ENCODE measurements at regions of chr15 and their contacts with region 1.

Region 1: GRCh38 chr15:77507911-77508310 is 87.2 kb downstream of the HMG20A start:
- DNase-seq: no peak
- H3K4me3 ChIP-seq: no peak overlapping the region
- H3K27ac ChIP-seq: peak overlapping the region; percentile 47 to 71 (median 54)
- H3K4me1 ChIP-seq: peaks cover 4 to 33% (median 29%) of the 10 kb centered on the region in 4 donors
- H3K27me3 ChIP-seq: no peaks in the 10 kb centered on the region
- CTCF ChIP-seq: no peak
- EP300 ChIP-seq: no peak
- POLR2A ChIP-seq: no peak

Region 2: DNA sequence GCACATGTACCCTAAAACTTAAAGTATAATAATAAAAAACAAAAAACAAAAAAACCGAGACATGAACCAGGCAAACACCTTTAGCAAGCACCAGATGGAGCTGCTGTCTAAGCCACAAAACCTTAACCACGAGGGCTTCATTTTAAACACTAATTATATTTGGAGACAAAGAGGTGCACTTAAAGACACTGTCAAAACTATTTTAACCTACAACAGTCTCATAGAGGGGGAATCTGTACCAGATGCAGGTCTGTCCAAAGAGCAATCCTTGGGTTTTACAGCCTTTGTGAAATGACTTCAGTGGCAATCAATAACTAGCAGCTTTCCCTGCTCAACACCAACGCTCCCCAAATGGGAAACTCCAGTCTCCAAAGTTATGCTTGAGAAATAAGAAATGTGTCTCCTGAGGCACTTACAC is 321.3 kb before region 1 on chr15:
- in situ Hi-C with region 1: no loop called
- intact Hi-C with region 1: loop called (anchors 10 kb)
- DNase-seq: no peak
- H3K4me3 ChIP-seq: no peak overlapping the region
- H3K27ac ChIP-seq: peak overlapping the region in 3 of 4 donors; percentile 19 to 59 (median 40)
- H3K4me1 ChIP-seq: peaks cover 3 to 43% (median 26%) of the 10 kb centered on the region in 4 donors
- H3K27me3 ChIP-seq: no peaks in the 10 kb centered on the region
- CTCF ChIP-seq: peak; percentile 35 to 60 (median 43)
- EP300 ChIP-seq: no peak
- POLR2A ChIP-seq: no peak

Region 3: GRCh38 chr15:77482570-77482969 is 25.3 kb before region 1 on chr15:
- in situ Hi-C with region 1: no loop called
- intact Hi-C with region 1: no loop called
- DNase-seq: no peak
- H3K4me3 ChIP-seq: no peak overlapping the region
- H3K27ac ChIP-seq: peak overlapping the region in 1 of 4 donors; percentile 28
- H3K4me1 ChIP-seq: peaks cover 0 to 37% (median 6%) of the 10 kb centered on the region in 4 donors
- H3K27me3 ChIP-seq: no peaks in the 10 kb centered on the region
- CTCF ChIP-seq: no peak
- EP300 ChIP-seq: no peak
- POLR2A ChIP-seq: no peak